Naive thymus-derived CD4-positive, alpha-beta T cell (primary cell): ENCODE measurements at regions of chr7 and their contacts with region 1.

Region 1: GRCh38 chr7:135977007-135977741 is at the start of gene MTPN:
- DNase-seq: peak; percentile 93 to 98 (median 96)
- ATAC-seq: peak; percentile 88
- H3K4me3 ChIP-seq: peak within 1 kb of the TSS; percentile 89
- H3K4me3 Mint-ChIP-seq: peak within 1 kb of the TSS; percentile 90 to 99 (median 94)
- H3K27ac ChIP-seq: peak within 1 kb of the TSS; percentile 94
- H3K27ac Mint-ChIP-seq: peak within 1 kb of the TSS; percentile 88 to 97 (median 93)
- H3K4me1 ChIP-seq: peaks cover 34 to 53% of the 10 kb centered on the region in 2 donors
- H3K4me1 Mint-ChIP-seq: peaks cover 46 to 81% (median 74%) of the 10 kb centered on the region in 7 donors
- H3K27me3 ChIP-seq: no peaks in the 10 kb centered on the region
- H3K27me3 Mint-ChIP-seq: peaks cover 0 to 2% (median 0%) of the 10 kb centered on the region in 5 donors
- total RNA-seq, gene MTPN: 69.7 to 117 (median 80.7) TPM

Region 2: DNA sequence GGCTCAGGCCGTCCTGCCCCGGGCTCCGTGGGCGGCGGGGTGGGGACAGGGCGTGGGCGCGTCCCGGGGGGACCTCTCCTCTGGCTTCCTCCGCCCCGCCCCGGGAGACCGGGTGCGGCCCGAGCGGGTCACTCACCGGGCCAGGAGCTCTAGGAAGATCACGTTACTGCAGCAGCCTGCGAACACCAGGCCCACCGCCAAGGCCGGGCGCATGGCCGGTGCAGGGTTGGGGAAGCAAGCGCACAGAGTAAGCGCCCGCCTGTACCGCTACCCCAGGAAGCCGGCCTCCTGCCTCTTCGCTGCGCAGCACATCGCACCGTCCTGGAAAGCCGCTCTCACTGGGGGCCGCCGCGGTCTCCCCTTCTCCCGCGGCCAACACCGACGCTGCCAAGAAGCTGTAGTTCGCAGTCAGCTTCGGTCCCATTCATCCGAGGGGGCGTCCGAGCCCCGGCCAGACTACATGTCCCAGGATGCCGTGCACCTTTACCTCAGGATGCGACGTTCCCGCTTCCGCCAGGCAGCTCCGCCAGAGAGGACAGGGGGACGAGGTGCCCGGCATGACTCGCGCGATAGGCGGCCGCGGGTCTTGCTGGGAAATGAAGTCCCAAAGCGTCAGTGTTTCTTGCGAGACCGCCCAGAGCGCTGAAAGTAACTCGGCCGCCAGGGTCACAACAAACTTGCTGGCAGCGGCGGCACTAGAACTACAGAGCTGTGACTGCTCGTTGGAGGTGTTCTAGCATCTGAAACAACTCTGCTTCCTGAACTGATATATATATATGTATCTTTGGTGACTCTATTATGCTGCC is 1660.4 kb before region 1 on chr7 and contains the start of gene SLC35B4:
- CTCF ChIA-PET with region 1: no interaction called
- POLR2A ChIA-PET with region 1: interaction called, 3 read pairs
- intact Hi-C with region 1: loop called (anchors 1 to 2 kb)
- DNase-seq: peak; percentile 79 to 95 (median 92)
- ATAC-seq: peak; percentile 99
- H3K4me3 ChIP-seq: peak within 1 kb of the TSS; percentile 79
- H3K4me3 Mint-ChIP-seq: peak within 1 kb of the TSS; percentile 88 to 97 (median 94)
- H3K27ac ChIP-seq: peak within 1 kb of the TSS; percentile 77
- H3K27ac Mint-ChIP-seq: peak within 1 kb of the TSS; percentile 81 to 93 (median 89)
- H3K4me1 ChIP-seq: peaks cover 0 to 15% of the 10 kb centered on the region in 2 donors
- H3K4me1 Mint-ChIP-seq: peaks cover 18 to 29% (median 26%) of the 10 kb centered on the region in 7 donors
- H3K27me3 ChIP-seq: no peaks in the 10 kb centered on the region
- H3K27me3 Mint-ChIP-seq: peaks cover 0 to 4% (median 0%) of the 10 kb centered on the region in 5 donors
- total RNA-seq, gene SLC35B4: 9.8 to 19.2 (median 12.2) TPM

Region 3: GRCh38 chr7:134986363-134987251 is 990.6 kb before region 1 on chr7 and contains the start of gene AGBL3:
- CTCF ChIA-PET with region 1: no interaction called
- POLR2A ChIA-PET with region 1: no interaction called
- intact Hi-C with region 1: loop called (anchors 5 to 10 kb)
- DNase-seq: peak; percentile 80 to 92 (median 89)
- ATAC-seq: peak; percentile 94
- H3K4me3 ChIP-seq: peak within 1 kb of the TSS; percentile 92
- H3K4me3 Mint-ChIP-seq: peak within 1 kb of the TSS; percentile 93 to 100 (median 98)
- H3K27ac ChIP-seq: peak within 1 kb of the TSS; percentile 96
- H3K27ac Mint-ChIP-seq: peak within 1 kb of the TSS; percentile 97 to 100 (median 99)
- H3K4me1 ChIP-seq: no peaks in the 10 kb centered on the region
- H3K4me1 Mint-ChIP-seq: peaks cover 20 to 61% (median 52%) of the 10 kb centered on the region in 7 donors
- H3K27me3 ChIP-seq: no peaks in the 10 kb centered on the region
- H3K27me3 Mint-ChIP-seq: no peaks in the 10 kb centered on the region
- total RNA-seq, gene AGBL3: 2.1 to 6.6 (median 3.8) TPM

Region 4: GRCh38 chr7:135281363-135281949 is 695.7 kb before region 1 on chr7:
- CTCF ChIA-PET with region 1: no interaction called
- POLR2A ChIA-PET with region 1: no interaction called
- intact Hi-C with region 1: loop called in 1 of 2 experiments (anchors 10 kb)
- DNase-seq: peak; percentile 26 to 81 (median 73)
- ATAC-seq: peak; percentile 99
- H3K4me3 ChIP-seq: no peak overlapping the region
- H3K4me3 Mint-ChIP-seq: peak overlapping the region in 3 of 10 donors; percentile 4 to 42 (median 8)
- H3K27ac ChIP-seq: no peak overlapping the region
- H3K27ac Mint-ChIP-seq: peak overlapping the region in 2 of 9 donors; percentile 11 to 51
- H3K4me1 ChIP-seq: no peaks in the 10 kb centered on the region
- H3K4me1 Mint-ChIP-seq: peaks cover 4 to 17% (median 12%) of the 10 kb centered on the region in 7 donors
- H3K27me3 ChIP-seq: no peaks in the 10 kb centered on the region
- H3K27me3 Mint-ChIP-seq: peaks cover 4 to 10% (median 9%) of the 10 kb centered on the region in 5 donors

Region 5: GRCh38 chr7:135575296-135575695 is 401.9 kb before region 1 on chr7:
- CTCF ChIA-PET with region 1: no interaction called
- POLR2A ChIA-PET with region 1: no interaction called
- intact Hi-C with region 1: loop called in 1 of 2 experiments (anchors 5 kb)
- DNase-seq: no peak
- ATAC-seq: no peak
- H3K4me3 ChIP-seq: no peak overlapping the region
- H3K4me3 Mint-ChIP-seq: peak overlapping the region in 1 of 10 donors; percentile 48
- H3K27ac ChIP-seq: no peak overlapping the region
- H3K27ac Mint-ChIP-seq: peak overlapping the region in 5 of 9 donors; percentile 7 to 87 (median 66)
- H3K4me1 ChIP-seq: no peaks in the 10 kb centered on the region
- H3K4me1 Mint-ChIP-seq: peaks cover 9 to 22% (median 13%) of the 10 kb centered on the region in 7 donors
- H3K27me3 ChIP-seq: no peaks in the 10 kb centered on the region
- H3K27me3 Mint-ChIP-seq: no peaks in the 10 kb centered on the region

Region 6: DNA sequence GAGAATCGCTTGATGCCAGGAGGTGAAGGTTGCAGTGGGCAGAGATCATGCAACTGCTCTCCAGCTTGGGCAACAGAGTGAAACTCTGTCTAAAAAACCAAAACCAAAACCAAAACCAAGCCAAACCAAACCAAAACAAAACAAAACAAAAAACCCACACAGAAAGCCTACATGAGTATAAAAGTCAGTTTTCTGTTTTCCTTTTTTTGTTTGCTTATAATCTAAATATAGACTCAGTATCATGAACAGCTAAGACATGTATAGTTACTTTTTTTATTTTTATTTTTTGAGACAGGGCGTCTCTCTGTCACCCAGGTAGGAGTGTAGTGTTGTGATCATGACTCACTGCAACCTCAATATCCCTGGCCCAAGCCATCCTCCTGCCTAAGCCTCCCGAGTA is 16.8 kb after region 1 on chr7:
- CTCF ChIA-PET with region 1: interaction called, 3 read pairs
- POLR2A ChIA-PET with region 1: no interaction called
- intact Hi-C with region 1: loop called in 1 of 2 experiments (anchors 1 kb)
- DNase-seq: no peak
- ATAC-seq: peak; percentile 34
- H3K4me3 ChIP-seq: no peak overlapping the region
- H3K4me3 Mint-ChIP-seq: peak overlapping the region in 1 of 10 donors; percentile 30
- H3K27ac ChIP-seq: no peak overlapping the region
- H3K27ac Mint-ChIP-seq: peak overlapping the region in 1 of 9 donors; percentile 42
- H3K4me1 ChIP-seq: peaks cover 0 to 6% of the 10 kb centered on the region in 2 donors
- H3K4me1 Mint-ChIP-seq: peaks cover 0 to 27% (median 6%) of the 10 kb centered on the region in 7 donors
- H3K27me3 ChIP-seq: no peaks in the 10 kb centered on the region
- H3K27me3 Mint-ChIP-seq: peaks cover 0 to 10% (median 6%) of the 10 kb centered on the region in 5 donors

Region 7: DNA sequence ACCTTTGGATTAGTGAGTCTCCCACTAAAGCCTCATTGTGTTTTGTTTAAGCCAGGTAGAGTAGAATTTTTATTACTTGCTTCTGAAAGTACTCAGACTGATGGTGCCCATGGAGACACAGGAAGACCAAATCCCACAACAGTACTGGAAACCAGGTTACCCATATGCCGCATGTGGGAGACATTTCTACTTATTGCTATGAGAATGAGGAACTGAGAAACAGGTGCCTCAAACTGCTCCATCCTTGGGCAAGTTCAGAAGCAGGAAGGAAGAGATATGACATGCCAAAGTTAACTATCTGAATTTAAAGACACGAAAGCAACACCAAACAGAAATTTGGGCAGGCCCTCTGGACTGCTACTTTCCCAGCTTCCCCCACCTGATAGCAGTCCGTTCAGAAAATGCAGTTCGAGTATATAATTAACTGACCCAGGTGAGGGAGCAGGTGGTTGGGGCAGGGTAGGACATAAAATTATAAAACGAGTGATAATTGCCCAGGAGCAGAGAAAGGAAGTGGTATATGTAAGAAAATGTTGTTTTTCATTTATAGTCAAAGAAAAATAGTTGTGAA is 382.2 kb after region 1 on chr7:
- CTCF ChIA-PET with region 1: no interaction called
- POLR2A ChIA-PET with region 1: no interaction called
- intact Hi-C with region 1: no loop called
- DNase-seq: no peak
- ATAC-seq: no peak
- H3K4me3 ChIP-seq: no peak overlapping the region
- H3K4me3 Mint-ChIP-seq: no peak overlapping the region
- H3K27ac ChIP-seq: no peak overlapping the region
- H3K27ac Mint-ChIP-seq: no peak overlapping the region
- H3K4me1 ChIP-seq: no peaks in the 10 kb centered on the region
- H3K4me1 Mint-ChIP-seq: no peaks in the 10 kb centered on the region
- H3K27me3 ChIP-seq: no peaks in the 10 kb centered on the region
- H3K27me3 Mint-ChIP-seq: no peaks in the 10 kb centered on the region